ENCODE measurements at regions of chr9 and their contacts with region 1.

Region 1: GRCh38 chr9:21317956-21318923 is 13.1 kb upstream of the IFNA5 start:
- DNase-seq: peak; percentile 33
- H3K4me3 ChIP-seq: no peak overlapping the region
- H3K27ac ChIP-seq: no peak overlapping the region
- H3K4me1 ChIP-seq: no peaks in the 10 kb centered on the region
- H3K27me3 ChIP-seq: peaks cover 6% of the 10 kb centered on the region
- CTCF ChIP-seq: peak; percentile 57

Region 2: GRCh38 chr9:21174671-21175070 is 143.6 kb before region 1 on chr9:
- CTCF ChIA-PET with region 1: no interaction called
- POLR2A ChIA-PET with region 1: no interaction called
- intact Hi-C with region 1: no loop called
- DNase-seq: no peak
- H3K4me3 ChIP-seq: no peak overlapping the region
- H3K27ac ChIP-seq: no peak overlapping the region
- H3K4me1 ChIP-seq: no peaks in the 10 kb centered on the region
- H3K27me3 ChIP-seq: no peaks in the 10 kb centered on the region
- CTCF ChIP-seq: no peak

Region 3: GRCh38 chr9:21455320-21455719 is 137.1 kb after region 1 on chr9:
- CTCF ChIA-PET with region 1: interaction called, 9 read pairs
- POLR2A ChIA-PET with region 1: no interaction called
- intact Hi-C with region 1: loop called (anchors 5 kb)
- DNase-seq: peak; percentile 1
- H3K4me3 ChIP-seq: no peak overlapping the region
- H3K27ac ChIP-seq: no peak overlapping the region
- H3K4me1 ChIP-seq: no peaks in the 10 kb centered on the region
- H3K27me3 ChIP-seq: no peaks in the 10 kb centered on the region
- CTCF ChIP-seq: peak; percentile 41

Measured in A673 (cell line).